ENCODE measurements at regions of chr1 and their contacts with region 1.

Region 1: DNA sequence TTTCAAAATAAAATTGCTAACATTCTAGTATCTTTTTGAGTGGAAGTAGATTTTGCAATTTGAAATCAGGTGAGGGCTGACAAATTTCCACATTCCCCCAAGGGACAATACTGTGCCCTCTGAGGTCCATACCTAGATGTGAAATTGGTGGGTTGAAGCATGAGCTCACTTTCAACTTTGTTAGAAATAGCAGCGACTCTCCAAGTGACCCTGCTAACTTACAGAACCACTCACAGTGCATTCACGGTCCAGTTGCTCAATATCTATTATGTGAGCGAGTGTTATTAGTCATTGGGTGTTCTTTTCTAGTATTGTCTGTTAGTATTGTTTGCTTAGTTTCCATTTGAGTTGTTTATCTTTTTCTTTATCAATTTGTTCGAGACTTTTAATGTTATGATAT is 53.6 kb upstream of the ASB17 start:
- DNase-seq: peak; percentile 47
- ATAC-seq: no peak
- H3K4me3 ChIP-seq: no peak overlapping the region
- H3K27ac ChIP-seq: no peak overlapping the region
- H3K4me1 ChIP-seq: no peaks in the 10 kb centered on the region
- H3K27me3 ChIP-seq: peaks cover 2% of the 10 kb centered on the region; the same call in 1 of the 2 replicates
- CTCF ChIP-seq: no peak
- POLR2A ChIP-seq: no peak
- RAD21 ChIP-seq: no peak

Region 2: DNA sequence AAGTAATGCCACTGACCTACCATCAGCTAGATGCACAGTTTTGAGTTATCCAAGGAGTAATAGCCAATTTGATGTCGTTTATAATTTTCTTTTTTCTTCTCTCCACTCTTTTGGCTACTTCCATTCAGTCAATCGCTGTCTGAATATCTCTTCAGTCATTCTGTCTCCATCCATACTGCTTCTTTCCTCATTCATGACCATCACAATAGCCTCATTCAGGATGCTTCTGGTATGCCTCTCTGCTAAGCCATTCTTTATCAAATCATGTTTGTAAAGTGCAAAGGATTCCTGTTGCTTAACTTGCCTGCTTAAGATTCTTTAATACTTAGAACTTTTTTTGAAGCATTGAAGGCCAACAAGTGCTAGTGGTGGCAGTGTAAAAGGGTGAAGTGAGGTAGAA is 1232.7 kb before region 1 on chr1:
- CTCF ChIA-PET with region 1: no interaction called
- POLR2A ChIA-PET with region 1: no interaction called
- dilution Hi-C with region 1: no loop called
- in situ Hi-C with region 1: no loop called
- intact Hi-C with region 1: loop called (anchors 5 kb)
- DNase-seq: no peak
- ATAC-seq: no peak
- H3K4me3 ChIP-seq: no peak overlapping the region
- H3K27ac ChIP-seq: no peak overlapping the region
- H3K4me1 ChIP-seq: no peaks in the 10 kb centered on the region
- H3K27me3 ChIP-seq: no peaks in the 10 kb centered on the region
- CTCF ChIP-seq: no peak
- POLR2A ChIP-seq: no peak
- RAD21 ChIP-seq: no peak

Measured in IMR-90 (cell line).